Cardiac septum (tissue), 1 donor: ENCODE measurements at regions of chr13 and their contacts with region 1.

Region 1: GRCh38 chr13:35978603-35979316 is 152.4 kb downstream of the DCLK1 start:
- DNase-seq: no peak

Region 2: GRCh38 chr13:36131222-36131930 is 152.6 kb after region 1 on chr13 and contains the start of gene DCLK1:
- intact Hi-C with region 1: loop called (anchors 5 kb)
- DNase-seq: no peak
- total RNA-seq, gene DCLK1: 13.8 TPM

Region 3: DNA sequence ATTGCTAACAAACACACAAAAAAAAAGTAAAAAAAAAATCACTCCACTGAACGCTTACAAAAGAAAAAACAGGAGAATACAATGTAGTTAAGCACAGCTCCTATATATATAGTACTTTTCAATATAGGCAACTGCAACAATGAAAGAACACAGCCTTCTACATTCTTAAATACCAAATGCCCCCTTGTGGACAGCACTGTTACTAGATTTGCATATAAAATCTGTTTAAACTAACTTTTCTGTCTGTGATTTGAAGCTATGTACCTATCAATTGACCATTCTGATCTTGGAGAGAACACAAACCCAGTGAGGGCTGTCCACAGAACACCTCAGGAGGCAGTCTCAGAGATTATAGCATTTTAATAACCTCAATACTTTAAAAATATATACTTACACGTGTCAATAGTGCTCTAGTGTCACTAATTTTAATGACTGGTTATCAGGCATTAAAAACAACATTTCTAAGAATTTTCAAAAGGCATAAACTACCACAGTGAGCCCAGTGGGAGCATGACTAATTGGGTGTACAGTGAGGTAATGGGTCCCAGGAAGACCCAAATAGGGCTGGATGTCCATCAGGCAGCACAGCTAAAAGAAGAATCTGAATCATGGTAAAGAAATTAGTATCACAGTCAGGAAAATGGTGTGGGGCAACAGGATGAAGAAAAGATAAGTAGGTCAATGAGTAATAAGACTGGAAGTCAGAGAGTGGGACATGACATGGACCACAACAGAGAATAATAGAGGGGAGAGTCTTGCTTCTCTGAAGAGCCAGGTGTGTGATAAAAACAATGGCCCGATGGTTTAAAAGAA is 296.6 kb after region 1 on chr13:
- intact Hi-C with region 1: loop called (anchors 1 kb)
- DNase-seq: no peak

Region 4: GRCh38 chr13:36543671-36544070 is 564.9 kb after region 1 on chr13:
- intact Hi-C with region 1: no loop called
- DNase-seq: no peak